K562 (cell line): ENCODE measurements at regions of chr5 and their contacts with region 1.

Region 1: GRCh38 chr5:118987988-118988865 is at the start of gene DTWD2:
- DNase-seq: peak; percentile 91 to 96 (median 93)
- ATAC-seq: peak; percentile 95
- H3K4me3 ChIP-seq: peak within 1 kb of the TSS; percentile 98
- H3K27ac ChIP-seq: peak within 1 kb of the TSS; percentile 92
- H3K4me1 ChIP-seq: peaks cover 13 to 27% of the 10 kb centered on the region in 2 experiments; a peak in 4 of 5 replicates
- H3K27me3 ChIP-seq: no peaks in the 10 kb centered on the region
- CTCF ChIP-seq: peak; percentile 89 to 92 (median 91)
- EP300 ChIP-seq: no peak
- POLR2A ChIP-seq: peak; percentile 87
- RAD21 ChIP-seq: peak; percentile 78 to 83
- polyA plus RNA-seq, gene DTWD2: 0.99 to 1.1 TPM

Region 2: GRCh38 chr5:119267958-119268386 is 279.7 kb after region 1 on chr5:
- CTCF ChIA-PET with region 1: no interaction called
- POLR2A ChIA-PET with region 1: no interaction called
- in situ Hi-C with region 1: no loop called
- intact Hi-C with region 1: loop called (anchors 5 kb)
- DNase-seq: peak; percentile 24 to 84 (median 47)
- ATAC-seq: peak; percentile 70
- H3K4me3 ChIP-seq: peak overlapping the region; percentile 84
- H3K27ac ChIP-seq: peak overlapping the region; percentile 85
- H3K4me1 ChIP-seq: peaks cover 26% of the 10 kb centered on the region in 2 experiments
- H3K27me3 ChIP-seq: no peaks in the 10 kb centered on the region
- CTCF ChIP-seq: peak; percentile 27 to 39 (median 32); a peak in 3 of 6 replicates
- EP300 ChIP-seq: no peak
- POLR2A ChIP-seq: no peak
- RAD21 ChIP-seq: no peak

Region 3: GRCh38 chr5:119322948-119323537 is 334.8 kb after region 1 on chr5:
- CTCF ChIA-PET with region 1: no interaction called
- POLR2A ChIA-PET with region 1: no interaction called
- in situ Hi-C with region 1: no loop called
- intact Hi-C with region 1: loop called (anchors 5 kb)
- DNase-seq: peak in 2 of 4 experiments; percentile 48 to 60
- ATAC-seq: peak; percentile 42
- H3K4me3 ChIP-seq: peak overlapping the region; percentile 30
- H3K27ac ChIP-seq: peak overlapping the region; percentile 92
- H3K4me1 ChIP-seq: peaks cover 57 to 78% of the 10 kb centered on the region in 2 experiments
- H3K27me3 ChIP-seq: no peaks in the 10 kb centered on the region
- CTCF ChIP-seq: no peak
- EP300 ChIP-seq: peak; percentile 41; the same call in 1 of the 2 replicates
- POLR2A ChIP-seq: no peak
- RAD21 ChIP-seq: peak in 1 of 2 experiments; percentile 16; a peak in 1 of 4 replicates

Region 4: DNA sequence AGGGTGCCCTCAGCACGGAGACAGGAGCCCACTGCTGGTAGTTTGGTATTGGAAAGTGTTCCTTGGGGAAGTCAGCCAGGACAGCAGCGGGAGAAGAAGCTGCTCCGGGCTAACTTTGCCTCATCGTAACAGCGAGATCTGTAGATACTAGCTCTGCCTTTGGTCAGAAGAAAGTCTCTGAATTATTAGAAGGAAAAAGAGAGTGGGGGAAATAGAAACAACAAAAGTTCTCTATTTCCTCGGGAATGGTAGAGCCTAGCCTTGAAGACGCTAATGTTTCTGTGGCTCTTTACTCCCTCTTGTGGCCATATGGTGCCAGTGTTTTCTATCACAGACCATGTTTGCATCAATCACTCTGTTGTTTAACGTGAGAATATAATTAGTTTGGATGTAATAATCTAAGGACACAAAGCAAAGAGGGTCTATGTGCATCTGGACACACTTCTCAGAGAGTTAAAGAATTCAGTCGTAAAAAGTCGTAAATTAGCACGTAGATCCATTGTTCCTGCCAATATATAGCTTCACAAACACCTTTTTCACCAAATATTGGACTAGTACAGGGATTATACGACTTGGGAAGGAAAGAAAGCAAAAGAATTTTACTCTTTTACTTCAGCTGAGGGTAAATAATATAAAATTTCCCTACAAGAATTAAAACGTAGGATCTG is 423.8 kb after region 1 on chr5:
- CTCF ChIA-PET with region 1: interaction called, 26 read pairs
- POLR2A ChIA-PET with region 1: no interaction called
- in situ Hi-C with region 1: loop called (anchors 5 kb)
- intact Hi-C with region 1: loop called (anchors 1 kb)
- DNase-seq: peak; percentile 69 to 84 (median 72)
- ATAC-seq: peak; percentile 96
- H3K4me3 ChIP-seq: peak overlapping the region; percentile 6
- H3K27ac ChIP-seq: peak overlapping the region; percentile 27; the same call in 1 of the 3 replicates
- H3K4me1 ChIP-seq: peaks cover 0 to 10% of the 10 kb centered on the region in 2 experiments; a peak in 3 of 5 replicates
- H3K27me3 ChIP-seq: no peaks in the 10 kb centered on the region
- CTCF ChIP-seq: peak; percentile 78 to 94 (median 87)
- EP300 ChIP-seq: no peak
- POLR2A ChIP-seq: no peak
- RAD21 ChIP-seq: peak; percentile 96 to 97

Region 5: GRCh38 chr5:119435436-119436132 is 447.4 kb after region 1 on chr5:
- CTCF ChIA-PET with region 1: interaction called, 3 read pairs
- POLR2A ChIA-PET with region 1: interaction called, 3 read pairs
- in situ Hi-C with region 1: no loop called
- intact Hi-C with region 1: loop called (anchors 2 kb)
- DNase-seq: peak; percentile 31 to 81 (median 40)
- ATAC-seq: peak; percentile 91
- H3K4me3 ChIP-seq: no peak overlapping the region
- H3K27ac ChIP-seq: no peak overlapping the region
- H3K4me1 ChIP-seq: peaks cover 0 to 15% of the 10 kb centered on the region in 2 experiments; a peak in 4 of 5 replicates
- H3K27me3 ChIP-seq: no peaks in the 10 kb centered on the region
- CTCF ChIP-seq: peak; percentile 73 to 82 (median 80)
- EP300 ChIP-seq: no peak
- POLR2A ChIP-seq: no peak
- RAD21 ChIP-seq: peak; percentile 66 to 75

Region 6: DNA sequence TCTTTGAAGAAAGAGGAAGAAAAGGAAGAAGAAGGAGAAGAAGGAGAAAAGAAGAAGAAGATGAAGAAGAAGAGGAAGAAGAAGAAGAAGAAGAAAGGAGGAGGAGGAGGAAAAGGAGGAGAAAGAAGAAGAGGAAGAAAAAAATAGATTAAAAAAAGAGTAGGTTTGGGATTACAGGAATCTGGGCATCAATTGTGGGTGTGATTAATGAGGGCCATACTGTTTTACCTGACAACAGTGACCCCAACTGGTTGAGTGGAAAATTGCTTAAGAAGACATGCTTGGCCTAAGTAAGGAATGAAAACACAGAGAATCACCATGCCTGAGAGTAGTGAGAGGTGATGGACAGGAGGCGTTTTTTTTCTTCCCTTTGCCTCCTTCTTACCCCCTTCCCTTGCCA is 755.7 kb after region 1 on chr5:
- CTCF ChIA-PET with region 1: no interaction called
- POLR2A ChIA-PET with region 1: no interaction called
- in situ Hi-C with region 1: loop called (anchors 25 kb)
- intact Hi-C with region 1: no loop called
- DNase-seq: peak; percentile 28 to 69 (median 40)
- ATAC-seq: peak; percentile 95
- H3K4me3 ChIP-seq: no peak overlapping the region
- H3K27ac ChIP-seq: no peak overlapping the region
- H3K4me1 ChIP-seq: peaks cover 0 to 3% of the 10 kb centered on the region in 2 experiments; a peak in 1 of 5 replicates
- H3K27me3 ChIP-seq: no peaks in the 10 kb centered on the region
- CTCF ChIP-seq: peak; percentile 54 to 68 (median 64); a peak in 5 of 6 replicates
- EP300 ChIP-seq: no peak
- POLR2A ChIP-seq: no peak
- RAD21 ChIP-seq: peak; percentile 51 to 77